Prostate gland (tissue), 2 donors: ENCODE measurements at regions of chr1 and their contacts with region 1.

Region 1: DNA sequence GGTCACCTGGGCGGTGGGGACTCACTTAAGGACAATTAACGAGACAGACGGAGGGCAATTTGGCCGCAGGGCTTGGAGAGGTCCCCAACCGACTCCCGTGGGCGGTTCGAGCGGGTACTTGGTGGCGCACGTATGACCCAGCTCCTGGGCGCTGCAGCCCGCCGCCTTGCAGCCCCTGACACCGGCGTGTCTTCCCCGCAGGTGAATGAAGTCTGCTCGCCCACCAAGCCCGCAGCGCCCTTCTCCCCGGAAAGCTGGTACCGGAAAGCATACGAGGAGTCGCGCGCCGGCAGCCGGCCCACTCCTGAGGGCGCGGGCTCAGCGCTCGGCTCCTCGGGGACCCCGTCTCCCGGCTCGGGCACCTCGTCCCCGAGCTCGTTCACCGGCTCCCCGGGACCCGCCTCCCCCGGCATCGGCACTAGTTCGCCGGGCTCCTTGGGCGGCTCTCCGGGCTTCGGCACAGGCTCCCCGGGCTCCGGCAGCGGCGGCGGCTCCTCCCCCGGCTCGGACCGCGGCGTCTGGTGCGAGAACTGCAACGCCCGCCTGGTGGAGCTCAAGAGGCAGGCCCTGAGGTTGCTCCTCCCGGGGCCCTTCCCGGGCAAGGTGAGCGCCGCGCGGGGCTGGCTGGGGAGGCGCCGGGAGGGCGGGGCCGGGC is 1.4 kb downstream of the KIF26B start:
- DNase-seq: peak; percentile 84
- H3K4me3 ChIP-seq: peak overlapping the region; percentile 41 to 44
- H3K27ac ChIP-seq: no peak overlapping the region
- H3K4me1 ChIP-seq: peaks cover 12% of the 10 kb centered on the region
- H3K27me3 ChIP-seq: no peaks in the 10 kb centered on the region
- CTCF ChIP-seq: peak; percentile 50 to 88 (median 69)
- POLR2A ChIP-seq: peak; percentile 16

Region 2: DNA sequence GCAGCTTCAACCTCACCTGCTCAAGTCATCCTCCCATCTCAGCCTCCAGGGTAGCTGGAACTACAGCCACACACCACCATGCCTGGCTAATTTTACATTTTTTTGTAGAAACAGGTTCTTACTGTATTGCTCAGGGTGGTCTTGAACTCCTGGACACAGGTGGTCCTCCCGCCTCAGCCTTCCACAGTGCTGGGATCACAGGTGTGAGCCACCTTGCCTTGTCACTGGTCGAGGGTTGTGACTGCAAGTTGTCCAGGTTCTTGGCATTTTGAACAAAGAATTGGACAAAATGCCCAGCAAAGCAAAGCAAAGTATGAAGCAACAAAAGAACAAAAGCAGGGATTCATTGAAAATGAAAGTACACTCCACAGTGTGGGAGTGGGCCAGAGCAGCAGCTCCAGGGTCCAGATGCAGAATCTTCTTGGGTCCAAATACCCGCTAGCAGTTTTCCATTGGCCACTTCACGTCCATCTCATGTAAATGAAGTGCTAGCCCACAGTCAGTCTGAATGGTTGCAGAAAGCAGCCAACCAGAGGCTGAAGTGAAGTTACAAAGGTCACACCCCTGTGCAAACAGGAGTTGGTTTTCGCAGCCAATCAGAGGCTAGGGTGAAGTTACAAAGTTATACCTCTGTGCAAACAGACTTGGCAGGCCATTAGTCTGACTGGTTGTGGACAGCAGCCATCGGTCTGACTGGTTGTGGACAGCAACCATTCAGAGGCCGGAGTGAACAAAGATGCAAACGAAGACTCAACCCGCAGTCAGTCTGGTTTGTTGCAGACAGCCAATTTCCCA is 110.9 kb before region 1 on chr1:
- intact Hi-C with region 1: no loop called
- DNase-seq: no peak
- H3K4me3 ChIP-seq: no peak overlapping the region
- H3K27ac ChIP-seq: no peak overlapping the region
- H3K4me1 ChIP-seq: no peaks in the 10 kb centered on the region
- H3K27me3 ChIP-seq: no peaks in the 10 kb centered on the region
- CTCF ChIP-seq: no peak
- POLR2A ChIP-seq: no peak

Region 3: GRCh38 chr1:245380790-245381535 is 224.8 kb after region 1 on chr1:
- intact Hi-C with region 1: loop called (anchors 2 kb)
- DNase-seq: no peak
- H3K4me3 ChIP-seq: no peak overlapping the region
- H3K27ac ChIP-seq: no peak overlapping the region
- H3K4me1 ChIP-seq: no peaks in the 10 kb centered on the region
- H3K27me3 ChIP-seq: no peaks in the 10 kb centered on the region
- CTCF ChIP-seq: peak in 1 of 4 experiments; percentile 9
- POLR2A ChIP-seq: no peak

Region 4: DNA sequence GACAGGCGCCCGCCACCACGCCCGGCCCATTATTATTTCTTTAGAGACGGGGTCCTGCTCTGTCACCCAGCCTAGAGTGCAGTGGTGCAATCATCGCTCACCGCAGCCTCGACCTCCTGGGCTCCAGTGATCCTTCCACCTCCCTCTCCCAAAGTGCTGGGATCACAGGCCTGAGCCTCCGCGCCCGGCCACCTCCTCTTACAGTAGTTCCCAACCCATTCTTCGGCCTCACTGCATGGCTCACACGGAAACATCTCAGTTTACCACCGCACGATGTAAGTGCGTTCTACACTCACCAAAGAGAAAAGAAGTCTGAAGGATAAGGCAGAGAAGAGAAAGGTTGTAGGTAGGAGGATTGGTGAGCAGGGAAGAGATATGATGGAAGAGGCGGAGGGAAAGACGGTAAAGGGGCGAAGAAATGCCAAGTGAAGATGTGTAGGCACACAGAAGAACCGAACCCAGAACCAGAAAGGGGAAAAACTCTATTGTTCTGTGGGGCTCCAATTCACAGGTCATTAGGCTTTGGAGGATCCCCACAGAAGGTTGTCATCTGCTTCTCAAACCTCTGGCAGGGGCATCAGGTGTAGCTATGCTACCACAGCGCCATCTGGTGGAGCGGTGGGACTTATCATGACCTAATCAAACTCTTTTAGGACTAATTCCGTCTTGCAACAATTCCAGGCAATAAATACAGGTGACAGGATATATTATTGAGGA is 846.7 kb after region 1 on chr1:
- intact Hi-C with region 1: loop called (anchors 2 kb)
- DNase-seq: peak; percentile 89
- H3K4me3 ChIP-seq: no peak overlapping the region
- H3K27ac ChIP-seq: no peak overlapping the region
- H3K4me1 ChIP-seq: peaks cover 9% of the 10 kb centered on the region
- H3K27me3 ChIP-seq: no peaks in the 10 kb centered on the region
- CTCF ChIP-seq: peak; percentile 84 to 95 (median 86)
- POLR2A ChIP-seq: no peak

Region 5: GRCh38 chr1:246117066-246117791 is 961.0 kb after region 1 on chr1:
- intact Hi-C with region 1: loop called (anchors 5 kb)
- DNase-seq: no peak
- H3K4me3 ChIP-seq: no peak overlapping the region
- H3K27ac ChIP-seq: no peak overlapping the region
- H3K4me1 ChIP-seq: no peaks in the 10 kb centered on the region
- H3K27me3 ChIP-seq: no peaks in the 10 kb centered on the region
- CTCF ChIP-seq: peak in 2 of 4 experiments; percentile 31 to 35
- POLR2A ChIP-seq: no peak

Region 6: DNA sequence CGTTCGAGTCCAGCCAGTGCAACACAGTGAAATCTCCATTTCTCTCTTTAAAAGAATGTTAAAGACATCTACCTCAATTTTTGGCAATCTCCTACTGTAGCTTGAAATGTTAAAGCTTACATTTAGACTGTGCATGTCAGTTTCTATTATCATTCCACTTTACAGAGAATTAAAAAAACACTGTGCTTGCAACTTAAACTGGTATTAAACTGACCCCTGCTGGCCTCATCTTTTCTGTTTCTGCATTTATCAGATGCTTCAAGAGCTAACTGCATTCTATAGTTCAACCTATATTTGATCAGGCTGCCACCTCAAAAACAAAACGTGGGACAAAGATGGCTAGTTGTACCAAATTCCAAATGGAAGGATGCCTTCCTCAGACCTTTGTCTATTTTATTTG is 1124.3 kb after region 1 on chr1:
- intact Hi-C with region 1: loop called (anchors 5 kb)
- DNase-seq: no peak
- H3K4me3 ChIP-seq: no peak overlapping the region
- H3K27ac ChIP-seq: no peak overlapping the region
- H3K4me1 ChIP-seq: no peaks in the 10 kb centered on the region
- H3K27me3 ChIP-seq: no peaks in the 10 kb centered on the region
- CTCF ChIP-seq: peak in 1 of 4 experiments; percentile 40
- POLR2A ChIP-seq: no peak

Region 7: DNA sequence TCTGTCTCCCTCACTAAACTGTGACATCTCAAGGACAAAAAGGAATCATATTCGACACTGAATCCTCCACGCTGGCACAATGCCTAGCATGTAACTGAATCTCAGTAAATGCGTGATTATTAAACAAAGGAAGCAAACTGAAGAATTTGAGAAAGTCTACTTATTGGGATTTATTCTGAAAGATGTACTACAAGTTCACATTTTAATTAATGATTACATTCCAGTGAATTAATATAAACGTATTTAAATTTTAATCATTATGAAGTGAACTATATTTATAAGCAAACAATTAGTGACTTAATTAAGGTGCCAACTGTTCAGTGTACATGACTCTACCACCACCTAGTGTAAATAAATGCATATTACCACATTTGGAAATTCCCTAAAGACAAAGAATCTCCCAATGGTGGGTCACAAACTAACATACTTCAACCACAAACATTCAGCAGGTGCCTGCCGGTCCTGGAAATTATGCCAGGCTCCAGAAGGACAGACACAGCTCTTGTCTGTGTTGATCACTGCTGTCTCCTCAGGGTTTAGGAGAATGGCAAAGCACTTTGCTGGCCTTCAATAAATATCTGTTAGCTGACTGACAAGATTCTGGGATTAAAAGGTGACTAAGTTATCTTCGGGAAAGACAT is 1294.5 kb after region 1 on chr1:
- intact Hi-C with region 1: loop called (anchors 5 kb)
- DNase-seq: no peak
- H3K4me3 ChIP-seq: no peak overlapping the region
- H3K27ac ChIP-seq: no peak overlapping the region
- H3K4me1 ChIP-seq: no peaks in the 10 kb centered on the region
- H3K27me3 ChIP-seq: no peaks in the 10 kb centered on the region
- CTCF ChIP-seq: peak in 3 of 4 experiments; percentile 57 to 72 (median 69)
- POLR2A ChIP-seq: no peak

Region 8: GRCh38 chr1:246492611-246493245 is 1336.5 kb after region 1 on chr1:
- intact Hi-C with region 1: loop called (anchors 2 kb)
- DNase-seq: peak; percentile 56
- H3K4me3 ChIP-seq: no peak overlapping the region
- H3K27ac ChIP-seq: no peak overlapping the region
- H3K4me1 ChIP-seq: no peaks in the 10 kb centered on the region
- H3K27me3 ChIP-seq: no peaks in the 10 kb centered on the region
- CTCF ChIP-seq: peak in 3 of 4 experiments; percentile 72 to 78 (median 73)
- POLR2A ChIP-seq: no peak